H1 (cell line): ENCODE measurements at regions of chr15 and their contacts with region 1.

Region 1: GRCh38 chr15:26864664-26865191 is 2.1 kb upstream of the GABRA5 start:
- DNase-seq: peak in 1 of 2 experiments; percentile 68
- H3K4me3 ChIP-seq: no peak overlapping the region
- H3K27ac ChIP-seq: no peak overlapping the region
- H3K4me1 ChIP-seq: peaks cover 0 to 13% (median 6%) of the 10 kb centered on the region in 4 experiments; a peak in 5 of 7 replicates
- H3K27me3 ChIP-seq: peaks cover 8 to 37% (median 24%) of the 10 kb centered on the region in 4 experiments
- CTCF ChIP-seq: peak; percentile 32 to 78 (median 65)
- EP300 ChIP-seq: no peak
- POLR2A ChIP-seq: no peak
- RAD21 ChIP-seq: peak; percentile 96 to 99

Region 2: DNA sequence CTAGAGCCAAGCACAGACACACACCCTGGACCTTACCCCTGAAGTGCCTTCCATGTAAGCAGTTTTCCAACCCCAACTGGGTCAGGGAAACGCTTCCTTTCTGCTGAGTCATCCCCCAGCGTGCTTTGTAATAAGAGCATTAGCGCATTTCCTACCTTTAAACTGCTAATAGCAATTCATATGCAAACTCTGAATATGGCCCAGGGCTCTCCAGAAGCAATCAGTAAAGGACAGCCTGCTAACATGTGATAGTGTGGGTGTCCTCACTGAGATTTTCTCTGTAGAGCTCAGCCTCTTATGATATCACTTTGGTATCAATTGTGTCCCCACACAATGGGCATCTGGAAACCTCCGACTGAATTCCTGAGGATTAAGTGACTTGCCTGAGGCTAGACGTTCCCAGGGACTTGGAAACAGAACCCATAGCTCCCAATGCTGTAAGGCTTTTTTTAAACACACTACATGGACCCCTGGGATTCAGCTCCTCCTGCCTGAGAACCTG is 97.5 kb before region 1 on chr15:
- CTCF ChIA-PET with region 1: no interaction called
- POLR2A ChIA-PET with region 1: no interaction called
- DNase-seq: peak; percentile 66 to 74
- H3K4me3 ChIP-seq: peak overlapping the region in 3 of 4 experiments; percentile 5 to 49 (median 16); a peak in 5 of 8 replicates
- H3K27ac ChIP-seq: peak overlapping the region; percentile 80
- H3K4me1 ChIP-seq: peaks cover 10 to 39% (median 28%) of the 10 kb centered on the region in 4 experiments
- H3K27me3 ChIP-seq: no peaks in the 10 kb centered on the region
- CTCF ChIP-seq: no peak
- EP300 ChIP-seq: no peak
- POLR2A ChIP-seq: peak in 1 of 2 experiments; percentile 67; a peak in 1 of 3 replicates
- RAD21 ChIP-seq: no peak

Region 3: DNA sequence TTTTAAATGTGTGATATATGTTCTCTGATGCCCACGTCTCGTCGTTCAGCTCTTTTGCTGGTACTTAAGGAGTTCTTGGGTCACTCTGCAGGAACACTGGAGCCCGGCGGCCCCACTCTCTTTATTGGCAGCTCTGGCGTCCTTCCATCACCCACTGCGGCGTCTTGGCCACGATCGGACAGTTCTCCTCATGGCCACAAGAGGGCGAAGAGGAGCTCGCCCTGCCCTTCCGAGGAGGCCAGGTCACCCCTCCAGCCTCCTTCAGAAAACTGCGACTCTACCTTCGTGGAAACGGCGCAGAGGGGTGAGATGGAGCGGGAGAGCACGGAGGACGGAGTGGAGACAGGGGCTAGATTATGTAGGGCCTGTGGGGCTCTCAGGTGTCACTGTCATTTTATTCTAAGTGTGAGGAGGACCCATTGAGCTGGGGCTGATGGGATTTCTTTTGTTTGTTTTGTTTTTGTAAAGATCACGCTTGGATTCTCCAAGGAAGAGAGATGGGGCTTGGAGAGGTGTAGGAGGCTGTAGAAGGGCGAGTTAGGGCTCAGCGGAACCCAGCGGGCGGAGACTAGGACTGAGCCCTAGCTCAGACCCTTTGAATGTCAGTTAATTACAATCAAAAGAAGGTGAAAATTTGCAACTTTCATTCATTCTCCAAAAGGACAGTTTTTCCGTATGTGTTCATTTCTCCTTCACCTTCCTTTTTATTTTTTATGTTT is 25.8 kb before region 1 on chr15:
- CTCF ChIA-PET with region 1: interaction called, 18 read pairs
- POLR2A ChIA-PET with region 1: interaction called, 4 read pairs
- DNase-seq: peak; percentile 36 to 89
- H3K4me3 ChIP-seq: peak overlapping the region in 3 of 4 experiments; percentile 8 to 40 (median 12); a peak in 4 of 8 replicates
- H3K27ac ChIP-seq: no peak overlapping the region
- H3K4me1 ChIP-seq: peaks cover 3 to 13% (median 6%) of the 10 kb centered on the region in 4 experiments
- H3K27me3 ChIP-seq: no peaks in the 10 kb centered on the region; a peak in 1 of 7 replicates
- CTCF ChIP-seq: peak; percentile 71 to 90 (median 87)
- EP300 ChIP-seq: no peak
- POLR2A ChIP-seq: no peak
- RAD21 ChIP-seq: peak; percentile 59 to 67

Region 4: DNA sequence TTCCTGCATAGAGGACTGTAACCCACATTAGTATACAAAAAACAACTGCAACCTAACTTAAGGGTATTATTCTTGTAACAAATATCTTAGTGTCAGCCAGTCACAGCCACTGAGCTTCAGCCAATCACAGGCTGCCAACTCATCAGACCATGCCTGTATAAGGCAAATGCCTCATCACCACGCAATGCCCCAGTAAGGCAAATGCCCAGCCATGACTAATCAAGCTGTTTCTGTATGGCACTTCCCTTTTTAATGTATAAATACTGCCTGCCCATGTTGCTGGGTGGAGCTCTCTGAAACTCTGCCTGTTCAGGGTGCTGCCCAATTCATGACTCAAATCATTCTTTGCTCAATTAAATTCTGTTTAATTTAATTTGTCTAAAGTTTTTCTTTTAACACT is 16.2 kb before region 1 on chr15:
- CTCF ChIA-PET with region 1: interaction called, 15 read pairs
- POLR2A ChIA-PET with region 1: no interaction called
- DNase-seq: no peak
- H3K4me3 ChIP-seq: no peak overlapping the region
- H3K27ac ChIP-seq: no peak overlapping the region
- H3K4me1 ChIP-seq: no peaks in the 10 kb centered on the region
- H3K27me3 ChIP-seq: no peaks in the 10 kb centered on the region
- CTCF ChIP-seq: no peak
- EP300 ChIP-seq: no peak
- POLR2A ChIP-seq: no peak
- RAD21 ChIP-seq: no peak

Region 5: GRCh38 chr15:27086149-27086548 is 221.4 kb after region 1 on chr15:
- CTCF ChIA-PET with region 1: no interaction called
- POLR2A ChIA-PET with region 1: no interaction called
- DNase-seq: no peak
- H3K4me3 ChIP-seq: no peak overlapping the region
- H3K27ac ChIP-seq: no peak overlapping the region
- H3K4me1 ChIP-seq: peaks cover 0 to 6% (median 0%) of the 10 kb centered on the region in 4 experiments; a peak in 4 of 7 replicates
- H3K27me3 ChIP-seq: no peaks in the 10 kb centered on the region; a peak in 1 of 7 replicates
- CTCF ChIP-seq: no peak
- EP300 ChIP-seq: no peak
- POLR2A ChIP-seq: no peak
- RAD21 ChIP-seq: no peak